ENCODE measurements at regions of chr12 and their contacts with region 1.

Region 1: DNA sequence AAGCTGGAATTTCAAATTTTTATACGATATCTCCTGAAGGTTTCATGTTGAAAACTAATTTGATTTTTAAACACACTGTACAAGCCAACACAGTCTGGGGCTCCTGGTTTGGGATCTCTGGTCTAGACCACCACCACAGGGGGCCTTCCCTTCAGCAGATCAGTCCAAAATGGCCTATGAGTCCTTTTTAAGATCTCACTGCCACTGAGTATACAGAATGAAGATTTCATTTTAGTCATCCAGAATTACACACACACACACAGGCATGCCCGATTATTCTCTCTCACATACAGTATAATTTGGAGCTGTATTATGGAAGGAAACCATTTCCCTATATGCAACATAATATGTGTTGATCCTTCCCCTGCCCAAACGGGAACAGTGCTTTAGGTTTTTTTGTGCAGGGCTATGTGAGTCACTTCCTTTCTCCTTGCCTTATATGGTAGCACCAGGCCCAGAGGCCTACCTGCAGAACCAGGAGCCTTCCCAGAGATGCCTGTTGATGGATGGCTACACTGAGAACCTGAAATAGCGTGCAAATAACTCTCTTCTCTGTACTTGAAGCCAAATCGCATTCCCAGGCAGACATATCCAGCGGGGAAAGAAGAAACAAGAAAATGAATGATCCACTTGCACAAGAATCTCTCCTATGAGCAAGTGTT is 28.1 kb upstream of the WNK1 start:
- DNase-seq: no peak
- H3K4me3 ChIP-seq: no peak overlapping the region
- H3K27ac ChIP-seq: no peak overlapping the region
- H3K27me3 ChIP-seq: no peaks in the 10 kb centered on the region
- CTCF ChIP-seq: no peak

Region 2: GRCh38 chr12:414859-415258 is 309.5 kb before region 1 on chr12:
- CTCF ChIA-PET with region 1: no interaction called
- POLR2A ChIA-PET with region 1: no interaction called
- DNase-seq: no peak
- H3K4me3 ChIP-seq: no peak overlapping the region
- H3K27ac ChIP-seq: no peak overlapping the region
- H3K27me3 ChIP-seq: no peaks in the 10 kb centered on the region
- CTCF ChIP-seq: no peak

Region 3: GRCh38 chr12:630656-631632 is 93.4 kb before region 1 on chr12:
- CTCF ChIA-PET with region 1: no interaction called
- POLR2A ChIA-PET with region 1: interaction called, 10 read pairs
- DNase-seq: no peak
- H3K4me3 ChIP-seq: no peak overlapping the region
- H3K27ac ChIP-seq: no peak overlapping the region
- H3K27me3 ChIP-seq: no peaks in the 10 kb centered on the region
- CTCF ChIP-seq: no peak

Region 4: DNA sequence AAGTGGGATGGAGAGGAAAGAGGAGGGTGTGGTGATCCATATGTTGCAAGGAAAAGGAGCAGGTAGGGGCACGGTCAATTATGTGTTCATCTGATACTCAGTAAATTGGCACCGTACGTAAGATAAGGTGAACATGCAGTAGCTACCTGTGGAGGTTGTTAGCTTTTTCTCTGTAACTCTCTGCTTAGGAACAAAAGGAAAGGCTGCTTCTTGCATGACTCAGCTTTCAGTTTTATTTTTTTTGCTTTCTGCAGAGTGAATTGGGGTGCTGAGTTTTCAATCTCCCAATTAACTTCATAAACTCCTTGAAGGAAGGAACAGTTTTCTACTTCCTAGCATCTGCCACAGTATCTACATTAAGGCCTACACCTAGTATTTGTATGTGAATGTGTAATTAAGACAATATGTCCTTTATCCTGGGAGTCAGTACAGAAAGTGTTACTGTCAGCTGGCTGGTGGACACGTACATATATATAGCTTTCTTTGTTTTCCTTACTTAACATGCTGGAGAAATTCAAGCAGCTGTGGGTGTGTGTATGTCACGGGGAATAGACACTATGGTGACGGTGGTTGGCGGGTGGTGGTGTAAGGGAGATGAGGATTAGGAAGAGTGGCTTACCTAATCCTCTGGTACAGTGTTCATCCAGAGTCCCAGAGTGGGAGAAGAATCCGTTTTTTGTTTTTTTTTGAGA is 12.0 kb before region 1 on chr12:
- CTCF ChIA-PET with region 1: no interaction called
- POLR2A ChIA-PET with region 1: no interaction called
- DNase-seq: no peak
- H3K4me3 ChIP-seq: no peak overlapping the region
- H3K27ac ChIP-seq: no peak overlapping the region
- H3K27me3 ChIP-seq: peaks cover 2% of the 10 kb centered on the region
- CTCF ChIP-seq: no peak